Dorsolateral prefrontal cortex (tissue), 120 donors: ENCODE measurements at regions of chr15 and their contacts with region 1.

Region 1: DNA sequence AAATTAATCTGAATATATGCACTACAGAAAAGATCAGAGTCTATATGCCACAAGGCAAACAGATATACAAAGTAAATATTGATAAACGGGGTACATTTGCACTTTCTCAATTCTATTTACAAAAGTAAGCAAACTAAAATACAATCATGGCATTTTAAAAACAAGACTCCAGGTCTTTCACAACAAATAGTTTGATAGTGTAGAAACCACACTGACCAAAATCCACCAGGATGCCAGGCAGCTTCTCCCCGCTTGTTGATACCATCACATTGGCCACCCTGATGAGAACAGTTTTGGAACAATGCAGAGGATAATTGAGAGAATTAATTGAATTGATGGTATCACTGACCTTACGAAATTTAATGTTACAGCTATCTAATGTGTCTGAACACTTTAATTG is 190.6 kb upstream of the TMCO5A start:
- DNase-seq: no peak
- H3K4me3 ChIP-seq: no peak overlapping the region
- H3K27ac ChIP-seq: no peak overlapping the region
- H3K27me3 ChIP-seq: peaks cover 0 to 33% (median 4%) of the 10 kb centered on the region in 45 donors
- CTCF ChIP-seq: no peak

Region 2: DNA sequence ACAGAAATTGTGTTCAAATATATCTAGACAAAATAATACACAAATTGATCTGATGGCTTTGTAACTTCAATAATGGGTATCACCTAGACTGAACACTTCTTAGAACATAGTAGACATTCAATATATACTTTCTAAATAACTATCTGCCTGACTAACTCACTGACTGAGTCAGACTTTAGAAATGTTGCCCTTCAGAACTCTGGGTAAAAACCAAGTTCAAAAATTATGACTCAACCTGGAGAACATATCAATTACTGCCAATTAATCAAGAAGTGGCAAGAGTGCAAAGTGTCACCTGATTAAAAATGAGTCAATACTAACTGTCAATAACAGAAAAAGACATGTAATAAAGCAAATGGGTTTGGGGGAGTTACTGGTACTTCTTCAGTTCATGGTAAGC is 46.1 kb after region 1 on chr15:
- intact Hi-C with region 1: loop called in 1 of 2 experiments (anchors 1 kb)
- DNase-seq: no peak
- H3K4me3 ChIP-seq: no peak overlapping the region
- H3K27ac ChIP-seq: no peak overlapping the region
- H3K27me3 ChIP-seq: no peaks in the 10 kb centered on the region
- CTCF ChIP-seq: no peak